Natural killer cell (primary cell): ENCODE measurements at regions of chr3 and their contacts with region 1.

Region 1: GRCh38 chr3:119352849-119353502 is 58.8 kb downstream of the ARHGAP31 start:
- DNase-seq: peak in 1 of 2 donors; percentile 75
- ATAC-seq: peak; percentile 58 to 63 (median 59)
- H3K4me3 ChIP-seq: no peak overlapping the region
- H3K4me3 Mint-ChIP-seq: no peak overlapping the region
- H3K27ac ChIP-seq: peak overlapping the region; percentile 3
- H3K27ac Mint-ChIP-seq: peak overlapping the region; percentile 56 to 85
- H3K4me1 ChIP-seq: peaks cover 15% of the 10 kb centered on the region
- H3K4me1 Mint-ChIP-seq: peaks cover 24 to 29% of the 10 kb centered on the region in 2 donors
- H3K27me3 ChIP-seq: no peaks in the 10 kb centered on the region
- H3K27me3 Mint-ChIP-seq: no peaks in the 10 kb centered on the region
- CTCF ChIP-seq: no peak

Region 2: GRCh38 chr3:118527514-118528044 is 825.4 kb before region 1 on chr3:
- intact Hi-C with region 1: no loop called
- DNase-seq: no peak
- ATAC-seq: no peak
- H3K4me3 ChIP-seq: no peak overlapping the region
- H3K4me3 Mint-ChIP-seq: no peak overlapping the region
- H3K27ac ChIP-seq: no peak overlapping the region
- H3K27ac Mint-ChIP-seq: no peak overlapping the region
- H3K4me1 ChIP-seq: no peaks in the 10 kb centered on the region
- H3K4me1 Mint-ChIP-seq: no peaks in the 10 kb centered on the region
- H3K27me3 ChIP-seq: no peaks in the 10 kb centered on the region
- H3K27me3 Mint-ChIP-seq: no peaks in the 10 kb centered on the region
- CTCF ChIP-seq: no peak

Region 3: DNA sequence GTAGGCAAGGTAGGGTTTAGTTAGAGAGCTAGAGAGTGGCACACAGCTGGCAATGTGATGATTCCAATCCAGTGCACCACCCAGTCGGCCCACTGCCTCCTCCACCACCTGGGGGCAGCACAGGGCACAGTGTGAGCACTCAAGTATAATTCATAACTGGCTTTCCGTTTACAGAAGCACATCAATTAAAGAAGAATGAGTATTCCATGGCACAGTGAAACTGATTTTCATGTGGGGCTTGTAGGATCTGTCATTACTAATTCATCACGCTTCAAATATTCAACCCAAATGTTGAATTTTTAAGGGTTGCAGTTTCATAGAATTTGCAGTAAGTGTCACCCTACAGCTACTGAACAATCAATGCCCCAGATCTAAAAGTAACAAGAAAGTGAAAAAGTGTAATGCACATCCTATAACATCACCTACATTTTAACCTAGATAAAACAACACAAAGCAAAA is 468.2 kb before region 1 on chr3:
- intact Hi-C with region 1: loop called (anchors 2 kb)
- DNase-seq: peak; percentile 65 to 83
- ATAC-seq: peak; percentile 80 to 95 (median 90)
- H3K4me3 ChIP-seq: no peak overlapping the region
- H3K4me3 Mint-ChIP-seq: no peak overlapping the region
- H3K27ac ChIP-seq: no peak overlapping the region
- H3K27ac Mint-ChIP-seq: no peak overlapping the region
- H3K4me1 ChIP-seq: no peaks in the 10 kb centered on the region
- H3K4me1 Mint-ChIP-seq: peaks cover 0 to 6% of the 10 kb centered on the region in 2 donors
- H3K27me3 ChIP-seq: no peaks in the 10 kb centered on the region
- H3K27me3 Mint-ChIP-seq: peaks cover 32 to 35% of the 10 kb centered on the region in 2 donors
- CTCF ChIP-seq: peak; percentile 87

Region 4: DNA sequence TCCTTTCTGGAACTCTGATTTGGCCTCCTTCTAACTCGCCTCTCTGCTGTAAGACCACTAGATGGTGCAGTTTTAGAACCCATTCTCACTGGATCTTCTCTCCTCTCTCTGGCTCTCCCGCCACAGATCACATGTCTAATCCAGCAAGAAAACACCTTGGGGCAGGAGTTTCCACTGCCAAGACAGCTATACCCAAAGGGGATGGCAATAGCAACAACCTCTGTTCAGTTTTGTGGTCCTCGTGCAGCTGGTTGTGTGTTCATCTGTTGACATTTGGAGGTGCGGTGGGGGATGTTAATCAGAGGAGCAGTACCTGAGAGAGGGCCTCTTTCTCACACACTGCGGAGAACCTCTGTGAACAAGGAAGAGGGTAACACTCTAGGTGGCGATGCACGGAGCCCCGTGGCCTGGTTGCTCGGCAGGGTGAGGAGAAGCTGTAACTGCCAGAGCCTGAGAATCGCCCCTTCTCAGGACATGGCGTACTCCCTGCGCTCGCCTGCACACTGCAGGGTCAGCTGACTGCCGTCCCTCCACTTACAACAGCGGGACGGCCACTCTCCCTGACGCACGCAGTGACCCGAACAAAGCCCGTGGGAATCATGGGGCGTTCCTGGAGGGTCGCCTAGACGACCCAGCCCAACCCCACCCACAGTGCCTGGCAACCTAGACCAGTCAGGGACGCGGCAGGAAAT is 207.3 kb before region 1 on chr3 and contains the start of gene TEX55:
- intact Hi-C with region 1: loop called (anchors 5 kb)
- DNase-seq: peak in 1 of 2 donors; percentile 51
- ATAC-seq: peak in 1 of 3 donors; percentile 60
- H3K4me3 ChIP-seq: no peak within 1 kb of the TSS
- H3K4me3 Mint-ChIP-seq: no peak within 1 kb of the TSS
- H3K27ac ChIP-seq: no peak within 1 kb of the TSS
- H3K27ac Mint-ChIP-seq: no peak within 1 kb of the TSS
- H3K4me1 ChIP-seq: no peaks in the 10 kb centered on the region
- H3K4me1 Mint-ChIP-seq: peaks cover 0 to 11% of the 10 kb centered on the region in 2 donors
- H3K27me3 ChIP-seq: no peaks in the 10 kb centered on the region
- H3K27me3 Mint-ChIP-seq: no peaks in the 10 kb centered on the region
- CTCF ChIP-seq: peak; percentile 34
- total RNA-seq, gene TEX55: not detected

Region 5: GRCh38 chr3:119240591-119241434 is 112.2 kb before region 1 on chr3 and contains the start of gene B4GALT4:
- intact Hi-C with region 1: loop called (anchors 5 kb)
- DNase-seq: peak; percentile 79 to 80
- ATAC-seq: peak; percentile 78 to 91 (median 84)
- H3K4me3 ChIP-seq: peak within 1 kb of the TSS; percentile 49
- H3K4me3 Mint-ChIP-seq: peak within 1 kb of the TSS; percentile 96
- H3K27ac ChIP-seq: peak within 1 kb of the TSS; percentile 79
- H3K27ac Mint-ChIP-seq: peak within 1 kb of the TSS; percentile 92 to 96
- H3K4me1 ChIP-seq: peaks cover 37% of the 10 kb centered on the region
- H3K4me1 Mint-ChIP-seq: peaks cover 29 to 37% of the 10 kb centered on the region in 2 donors
- H3K27me3 ChIP-seq: no peaks in the 10 kb centered on the region
- H3K27me3 Mint-ChIP-seq: no peaks in the 10 kb centered on the region
- CTCF ChIP-seq: no peak
- total RNA-seq, gene B4GALT4: 35.1 to 54.1 (median 48.8) TPM

Region 6: GRCh38 chr3:119279101-119279554 is 73.8 kb before region 1 on chr3:
- intact Hi-C with region 1: loop called (anchors 1 kb)
- DNase-seq: no peak
- ATAC-seq: no peak
- H3K4me3 ChIP-seq: no peak overlapping the region
- H3K4me3 Mint-ChIP-seq: no peak overlapping the region
- H3K27ac ChIP-seq: no peak overlapping the region
- H3K27ac Mint-ChIP-seq: no peak overlapping the region
- H3K4me1 ChIP-seq: no peaks in the 10 kb centered on the region
- H3K4me1 Mint-ChIP-seq: peaks cover 0 to 5% of the 10 kb centered on the region in 2 donors
- H3K27me3 ChIP-seq: no peaks in the 10 kb centered on the region
- H3K27me3 Mint-ChIP-seq: no peaks in the 10 kb centered on the region
- CTCF ChIP-seq: no peak

Region 7: DNA sequence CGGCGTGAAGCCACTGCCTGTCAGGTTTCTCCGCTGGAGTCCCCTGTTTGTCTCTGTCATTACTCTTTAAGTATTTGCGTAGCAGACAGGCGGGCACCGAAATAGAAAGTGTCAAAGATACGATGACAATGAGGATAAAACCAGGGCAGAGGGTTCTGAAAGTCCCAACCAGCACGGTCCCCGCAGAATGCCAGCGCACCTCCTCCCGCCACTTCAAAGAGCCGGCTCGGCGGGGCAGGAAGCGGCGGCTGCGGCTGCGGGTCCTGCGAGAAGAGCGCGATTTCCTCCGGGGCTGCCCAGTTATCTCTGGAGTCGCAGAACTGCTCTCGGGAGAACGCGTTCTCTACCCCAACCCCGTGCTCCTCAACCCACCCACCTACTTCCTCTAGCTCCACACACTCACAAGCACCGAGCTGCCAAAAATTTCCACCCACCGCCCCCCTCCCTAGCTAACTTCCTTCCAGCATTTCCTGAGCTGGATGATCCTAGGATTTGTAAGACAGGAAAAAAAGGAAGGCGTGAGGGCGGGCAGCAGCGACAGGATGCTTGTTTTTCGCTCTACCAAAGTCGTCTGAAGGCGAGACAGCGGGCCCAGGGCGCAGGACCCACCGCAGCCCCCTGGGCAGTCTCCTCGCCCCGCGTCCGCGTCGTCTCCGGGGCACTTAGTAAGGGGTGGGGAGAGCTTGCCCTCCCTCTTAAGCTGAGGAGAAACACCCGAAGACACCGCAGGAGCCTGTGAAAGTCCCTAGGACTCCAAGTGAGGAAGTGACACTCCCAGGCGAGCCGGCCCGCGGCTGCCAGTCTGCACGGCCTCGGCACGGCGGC is 58.9 kb before region 1 on chr3 and contains the start of gene ARHGAP31:
- intact Hi-C with region 1: loop called (anchors 1 kb)
- DNase-seq: peak; percentile 81 to 94
- ATAC-seq: peak; percentile 65 to 82 (median 70)
- H3K4me3 ChIP-seq: peak within 1 kb of the TSS; percentile 82
- H3K4me3 Mint-ChIP-seq: peak within 1 kb of the TSS; percentile 95
- H3K27ac ChIP-seq: peak within 1 kb of the TSS; percentile 99
- H3K27ac Mint-ChIP-seq: peak within 1 kb of the TSS; percentile 95 to 97
- H3K4me1 ChIP-seq: peaks cover 60% of the 10 kb centered on the region
- H3K4me1 Mint-ChIP-seq: peaks cover 72 to 74% of the 10 kb centered on the region in 2 donors
- H3K27me3 ChIP-seq: peaks cover 9% of the 10 kb centered on the region
- H3K27me3 Mint-ChIP-seq: peaks cover 9 to 15% of the 10 kb centered on the region in 2 donors
- CTCF ChIP-seq: no peak
- total RNA-seq, gene ARHGAP31: 4.1 to 8.4 (median 8.4) TPM

Region 8: GRCh38 chr3:119322835-119323722 is 29.9 kb before region 1 on chr3:
- intact Hi-C with region 1: loop called (anchors 2 kb)
- DNase-seq: peak; percentile 90 to 95
- ATAC-seq: peak; percentile 85 to 94 (median 89)
- H3K4me3 ChIP-seq: peak overlapping the region; percentile 83
- H3K4me3 Mint-ChIP-seq: peak overlapping the region; percentile 98
- H3K27ac ChIP-seq: peak overlapping the region; percentile 92
- H3K27ac Mint-ChIP-seq: peak overlapping the region; percentile 97 to 98
- H3K4me1 ChIP-seq: peaks cover 15% of the 10 kb centered on the region
- H3K4me1 Mint-ChIP-seq: peaks cover 12 to 31% of the 10 kb centered on the region in 2 donors
- H3K27me3 ChIP-seq: no peaks in the 10 kb centered on the region
- H3K27me3 Mint-ChIP-seq: no peaks in the 10 kb centered on the region
- CTCF ChIP-seq: no peak

Region 9: GRCh38 chr3:119794971-119795612 is 442.1 kb after region 1 on chr3:
- intact Hi-C with region 1: no loop called
- DNase-seq: no peak
- ATAC-seq: no peak
- H3K4me3 ChIP-seq: no peak overlapping the region
- H3K4me3 Mint-ChIP-seq: no peak overlapping the region
- H3K27ac ChIP-seq: no peak overlapping the region
- H3K27ac Mint-ChIP-seq: no peak overlapping the region
- H3K4me1 ChIP-seq: no peaks in the 10 kb centered on the region
- H3K4me1 Mint-ChIP-seq: no peaks in the 10 kb centered on the region
- H3K27me3 ChIP-seq: no peaks in the 10 kb centered on the region
- H3K27me3 Mint-ChIP-seq: peaks cover 9 to 14% of the 10 kb centered on the region in 2 donors
- CTCF ChIP-seq: no peak